T47D (cell line): ENCODE measurements at regions of chr2 and their contacts with region 1.

Region 1: GRCh38 chr2:173210270-173211196 is 134.9 kb downstream of the MAP3K20 start:
- DNase-seq: peak; percentile 16 to 73

Region 2: GRCh38 chr2:172995323-172996244 is 214.9 kb before region 1 on chr2:
- in situ Hi-C with region 1: no loop called
- DNase-seq: no peak

Region 3: GRCh38 chr2:173027181-173028128 is 183.1 kb before region 1 on chr2:
- in situ Hi-C with region 1: loop called (anchors 25 kb)
- DNase-seq: peak in 1 of 2 experiments; percentile 83

Region 4: DNA sequence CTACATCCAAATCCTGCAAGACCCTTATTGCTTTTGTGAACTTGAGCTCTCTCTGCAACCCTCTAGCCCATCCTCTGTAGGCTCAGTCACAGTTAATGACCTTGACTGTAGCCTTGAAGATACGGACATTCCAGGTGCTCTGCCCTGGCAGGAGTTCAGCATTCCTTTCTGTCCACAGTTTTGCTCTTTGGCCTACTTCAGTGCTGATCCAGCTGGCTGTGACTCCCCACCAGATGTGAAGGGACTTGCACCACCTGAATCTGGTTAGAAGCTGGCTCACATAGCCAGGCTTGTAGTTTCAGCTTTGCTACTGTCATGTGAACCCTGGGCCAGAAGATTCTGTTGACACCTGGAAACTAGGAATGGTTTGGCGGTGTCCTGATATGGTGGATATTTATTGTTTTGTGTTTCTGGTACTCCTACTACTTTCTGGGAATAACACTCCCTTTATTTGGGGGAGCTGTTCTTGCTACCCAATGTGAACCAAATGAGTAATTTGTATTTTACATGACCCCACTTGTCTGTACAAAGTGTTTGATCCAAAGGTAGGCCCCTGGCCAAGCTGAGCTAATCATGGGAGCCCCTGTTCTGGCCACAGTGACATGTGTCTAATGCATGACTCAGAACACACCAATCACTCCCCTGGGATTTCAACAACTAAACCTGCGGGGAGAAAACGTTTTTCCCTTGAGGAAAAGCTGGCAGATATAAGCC is 217.5 kb after region 1 on chr2:
- in situ Hi-C with region 1: no loop called
- DNase-seq: peak in 1 of 2 experiments; percentile 8